Motor neuron (in vitro differentiated cells): ENCODE measurements at regions of chr18 and their contacts with region 1.

Region 1: GRCh38 chr18:9614401-9615279 is at the start of gene PPP4R1:
- ATAC-seq: peak; percentile 55 to 83 (median 73)
- H3K4me3 ChIP-seq: peak within 1 kb of the TSS; percentile 49 to 97 (median 70)
- H3K27ac ChIP-seq: peak within 1 kb of the TSS; percentile 94 to 98
- H3K4me1 ChIP-seq: peaks cover 12 to 13% of the 10 kb centered on the region in 2 donors
- total RNA-seq, gene PPP4R1: 43.3 to 126 (median 59.7) TPM

Region 2: GRCh38 chr18:9673296-9674251 is 58.9 kb after region 1 on chr18:
- in situ Hi-C with region 1: loop called in 1 of 9 experiments (anchors 10 kb)
- ATAC-seq: peak in 6 of 8 experiments; percentile 36 to 98 (median 76)
- H3K4me3 ChIP-seq: no peak overlapping the region
- H3K27ac ChIP-seq: no peak overlapping the region
- H3K4me1 ChIP-seq: no peaks in the 10 kb centered on the region

Region 3: DNA sequence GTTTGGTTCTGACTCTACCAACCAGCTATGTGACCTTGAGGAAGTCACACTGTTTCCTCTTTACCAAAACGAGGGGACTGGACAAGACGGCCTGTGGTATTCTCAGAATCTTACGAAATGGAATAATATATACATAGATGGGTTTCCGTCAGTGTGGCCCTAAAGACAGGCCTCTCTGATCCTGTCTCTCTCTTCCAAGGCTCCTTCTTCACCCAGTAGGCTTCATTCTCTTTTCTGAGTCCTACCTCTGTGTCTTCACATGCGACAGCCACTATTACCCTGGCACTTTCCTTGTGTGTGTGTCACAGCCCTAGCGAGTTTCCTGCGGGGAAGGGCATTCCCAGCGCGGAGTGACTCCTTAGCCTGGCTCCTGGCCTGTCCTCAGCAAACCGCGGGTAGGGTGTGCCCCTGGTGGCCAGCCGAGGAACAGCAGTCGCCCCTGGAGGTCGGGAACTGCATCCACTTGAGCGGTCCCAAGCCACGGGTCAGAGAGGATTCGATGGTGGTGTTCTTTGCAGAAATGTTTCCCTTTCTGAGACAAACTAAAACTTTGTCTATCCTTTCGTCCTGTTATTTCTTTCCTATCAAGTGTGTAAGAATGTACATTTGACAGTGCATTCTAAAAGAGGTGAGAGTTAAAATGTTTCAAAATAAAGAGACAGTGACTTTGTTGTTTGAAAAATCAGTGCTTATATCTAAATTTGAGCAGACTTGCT is 156.8 kb after region 1 on chr18:
- in situ Hi-C with region 1: loop called in 1 of 9 experiments (anchors 25 kb)
- ATAC-seq: peak; percentile 94 to 100 (median 97)
- H3K4me3 ChIP-seq: no peak overlapping the region
- H3K27ac ChIP-seq: no peak overlapping the region
- H3K4me1 ChIP-seq: peaks cover 0 to 4% of the 10 kb centered on the region in 2 donors